ENCODE measurements at regions of chr9 and their contacts with region 1.

Region 1: DNA sequence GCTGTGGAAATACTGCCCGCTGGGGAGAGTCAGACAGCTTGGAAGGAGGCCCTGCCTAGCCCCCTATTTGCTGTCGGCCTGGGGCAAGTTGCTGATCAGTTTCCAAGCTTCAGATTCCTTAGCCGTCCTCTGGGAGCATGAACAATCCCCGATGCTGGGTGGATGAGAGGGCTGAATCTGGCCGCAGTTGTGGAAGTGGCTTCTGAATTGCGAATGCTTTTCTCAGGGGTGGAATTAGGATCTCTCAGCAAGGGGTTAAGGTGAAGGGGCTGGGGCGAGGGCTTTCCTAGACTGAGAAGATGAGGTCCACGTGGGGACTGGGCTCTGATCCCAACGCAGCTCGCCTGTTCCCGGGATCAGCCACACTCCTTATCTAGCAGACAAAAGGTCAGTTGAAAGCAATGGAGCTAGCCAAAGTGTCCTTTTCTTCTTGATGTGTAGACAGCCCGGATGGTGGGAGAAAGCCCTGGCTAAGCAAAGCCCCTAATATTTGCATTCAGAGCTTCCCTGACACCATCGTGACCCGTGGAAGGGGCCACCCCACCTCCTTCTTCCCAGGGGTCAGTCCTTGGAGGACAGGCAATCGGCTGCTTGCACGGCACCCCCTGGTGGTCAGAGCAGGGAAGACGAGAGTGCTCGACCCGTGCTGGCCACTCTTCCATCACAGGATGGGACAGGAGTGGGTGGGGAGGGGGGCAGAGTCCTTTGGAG is 54.9 kb downstream of the COL15A1 start:
- DNase-seq: peak; percentile 76
- ATAC-seq: peak; percentile 74
- H3K4me3 Mint-ChIP-seq: no peak overlapping the region
- H3K27ac Mint-ChIP-seq: no peak overlapping the region
- H3K4me1 Mint-ChIP-seq: peaks cover 16% of the 10 kb centered on the region
- H3K27me3 Mint-ChIP-seq: peaks cover 1% of the 10 kb centered on the region
- CTCF ChIP-seq: peak; percentile 94

Region 2: GRCh38 chr9:98807070-98807810 is 191.4 kb before region 1 on chr9 and contains the start of gene GALNT12:
- CTCF ChIA-PET with region 1: interaction called, 18 read pairs
- POLR2A ChIA-PET with region 1: no interaction called
- intact Hi-C with region 1: no loop called
- DNase-seq: peak; percentile 63
- ATAC-seq: peak; percentile 83
- H3K4me3 Mint-ChIP-seq: peak within 1 kb of the TSS; percentile 82
- H3K27ac Mint-ChIP-seq: peak within 1 kb of the TSS; percentile 50
- H3K4me1 Mint-ChIP-seq: peaks cover 25% of the 10 kb centered on the region
- H3K27me3 Mint-ChIP-seq: peaks cover 2% of the 10 kb centered on the region
- CTCF ChIP-seq: no peak
- total RNA-seq, gene GALNT12: 12.8 to 14.3 TPM

Region 3: GRCh38 chr9:98867429-98868168 is 131.0 kb before region 1 on chr9:
- CTCF ChIA-PET with region 1: no interaction called
- POLR2A ChIA-PET with region 1: no interaction called
- intact Hi-C with region 1: no loop called
- DNase-seq: peak; percentile 13
- ATAC-seq: no peak
- H3K4me3 Mint-ChIP-seq: no peak overlapping the region
- H3K27ac Mint-ChIP-seq: peak overlapping the region; percentile 28
- H3K4me1 Mint-ChIP-seq: no peaks in the 10 kb centered on the region
- H3K27me3 Mint-ChIP-seq: peaks cover 21% of the 10 kb centered on the region
- CTCF ChIP-seq: no peak

Region 4: DNA sequence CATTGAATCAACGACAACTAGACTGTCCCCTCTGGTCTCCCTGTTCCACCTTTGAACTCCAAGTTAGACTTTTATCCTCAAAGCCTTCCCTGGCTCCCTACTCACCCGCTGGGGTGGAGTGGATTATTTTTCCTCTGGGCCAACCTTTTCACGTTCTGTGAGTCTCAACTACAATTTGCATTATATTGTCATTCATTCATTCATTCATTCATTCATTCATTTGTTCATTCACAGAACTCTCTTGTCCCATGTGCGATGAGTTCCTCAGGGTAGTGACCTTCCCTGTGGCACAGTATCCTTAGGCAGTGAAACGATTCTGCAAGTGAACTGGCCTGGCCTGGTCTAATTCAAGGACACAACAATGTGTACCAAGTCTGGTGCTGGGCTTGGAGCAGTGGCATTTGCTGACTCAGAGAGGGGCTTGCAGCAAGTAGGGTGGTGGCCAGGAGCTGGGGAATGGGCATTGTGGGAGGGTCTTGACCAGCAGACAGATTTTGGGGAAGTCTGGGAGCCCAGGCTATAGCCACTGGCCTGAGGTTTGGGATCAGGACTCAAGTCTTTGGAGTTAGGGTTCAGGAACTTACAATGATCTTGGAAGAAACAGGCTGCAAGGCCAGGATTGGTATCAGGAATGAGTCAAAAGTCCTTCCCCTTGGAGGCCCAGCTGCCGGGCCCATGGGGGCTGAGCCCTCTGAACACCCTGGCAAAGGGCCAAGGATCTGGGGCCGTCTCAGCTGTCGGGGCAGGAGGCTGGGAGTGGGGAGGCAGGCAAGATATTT is 92.1 kb before region 1 on chr9:
- CTCF ChIA-PET with region 1: no interaction called
- POLR2A ChIA-PET with region 1: no interaction called
- intact Hi-C with region 1: no loop called
- DNase-seq: no peak
- ATAC-seq: no peak
- H3K4me3 Mint-ChIP-seq: no peak overlapping the region
- H3K27ac Mint-ChIP-seq: no peak overlapping the region
- H3K4me1 Mint-ChIP-seq: no peaks in the 10 kb centered on the region
- H3K27me3 Mint-ChIP-seq: peaks cover 4% of the 10 kb centered on the region
- CTCF ChIP-seq: no peak

Region 5: DNA sequence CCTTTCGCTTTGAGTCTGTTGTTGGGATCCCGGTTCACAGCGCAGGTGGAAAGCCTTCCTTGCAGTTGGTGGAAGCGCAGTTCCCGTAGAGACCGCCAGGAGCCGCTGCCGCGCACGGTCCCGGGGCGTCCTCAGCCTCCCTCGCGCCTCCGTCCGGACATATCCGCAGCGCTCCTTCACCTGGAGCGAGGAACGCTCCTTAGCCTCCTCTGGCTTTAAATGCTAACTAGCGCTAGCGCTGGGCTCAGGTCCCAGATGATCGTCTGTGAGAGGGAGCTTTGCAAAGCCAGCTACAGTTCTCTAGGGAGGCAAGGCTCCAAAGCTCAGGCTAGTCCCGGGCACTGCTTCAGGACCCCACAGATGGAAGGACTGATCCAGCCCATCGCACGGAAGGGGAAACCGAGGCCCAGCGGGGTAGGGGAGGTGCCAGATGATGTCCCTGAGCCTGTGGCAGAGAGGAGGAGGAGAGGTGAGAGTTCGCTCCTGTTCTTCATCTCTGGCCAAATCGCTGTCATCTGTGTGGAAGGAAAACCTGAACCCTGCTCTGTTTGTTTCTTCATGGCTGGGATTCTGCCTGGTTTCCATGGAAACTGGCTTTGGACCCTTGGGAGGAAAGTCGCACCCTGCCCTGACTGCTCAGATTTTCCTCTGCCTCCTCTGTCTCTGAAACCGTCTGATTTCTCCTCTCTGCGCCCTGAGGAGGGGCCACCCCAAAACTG is 23.4 kb before region 1 on chr9:
- CTCF ChIA-PET with region 1: interaction called, 39 read pairs
- POLR2A ChIA-PET with region 1: no interaction called
- intact Hi-C with region 1: no loop called
- DNase-seq: peak; percentile 86
- ATAC-seq: peak; percentile 99
- H3K4me3 Mint-ChIP-seq: no peak overlapping the region
- H3K27ac Mint-ChIP-seq: no peak overlapping the region
- H3K4me1 Mint-ChIP-seq: peaks cover 9% of the 10 kb centered on the region
- H3K27me3 Mint-ChIP-seq: no peaks in the 10 kb centered on the region
- CTCF ChIP-seq: peak; percentile 93

Region 6: GRCh38 chr9:99026338-99027298 is 28.0 kb after region 1 on chr9:
- CTCF ChIA-PET with region 1: interaction called, 10 read pairs
- POLR2A ChIA-PET with region 1: no interaction called
- intact Hi-C with region 1: no loop called
- DNase-seq: no peak
- ATAC-seq: peak; percentile 61
- H3K4me3 Mint-ChIP-seq: no peak overlapping the region
- H3K27ac Mint-ChIP-seq: no peak overlapping the region
- H3K4me1 Mint-ChIP-seq: peaks cover 20% of the 10 kb centered on the region
- H3K27me3 Mint-ChIP-seq: no peaks in the 10 kb centered on the region
- CTCF ChIP-seq: no peak

Region 7: DNA sequence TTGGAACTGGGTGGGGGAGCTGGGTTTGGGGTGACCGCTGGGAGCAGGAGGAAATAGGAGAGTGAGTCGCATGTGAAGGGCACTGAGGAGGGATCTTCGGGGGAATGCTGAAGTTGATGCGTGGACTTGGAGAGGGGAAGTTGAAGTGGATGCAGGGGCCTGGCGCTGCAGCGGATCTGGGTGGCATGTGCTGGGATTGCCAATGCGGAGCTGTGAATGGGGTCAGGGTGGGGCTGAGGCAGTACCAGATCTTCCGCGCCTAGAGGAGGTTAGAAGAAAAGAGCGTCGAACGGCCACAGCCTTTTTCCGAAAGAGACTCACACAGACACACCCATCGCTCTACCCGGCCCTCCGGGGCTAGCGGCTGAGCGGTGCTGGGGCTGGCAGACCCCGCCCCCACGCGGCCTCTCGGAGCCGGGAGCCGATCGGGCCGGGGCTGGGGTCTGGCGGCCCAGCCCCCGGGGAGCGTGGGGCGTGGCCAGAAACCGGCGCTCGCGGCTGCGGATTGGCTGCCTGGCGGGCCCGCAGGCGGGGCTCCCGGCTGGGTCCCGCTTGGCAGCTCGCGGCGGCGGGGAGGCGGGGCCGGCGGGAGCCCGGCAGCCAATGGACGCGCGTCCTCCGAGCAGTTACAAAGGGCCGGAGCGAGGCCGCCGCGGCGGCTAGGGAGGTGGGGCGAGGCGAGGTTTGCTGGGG is 106.0 kb after region 1 on chr9 and contains the start of gene TGFBR1:
- CTCF ChIA-PET with region 1: interaction called, 21 read pairs
- POLR2A ChIA-PET with region 1: interaction called, 3 read pairs
- intact Hi-C with region 1: no loop called
- DNase-seq: peak; percentile 92
- ATAC-seq: peak; percentile 87
- H3K4me3 Mint-ChIP-seq: peak within 1 kb of the TSS; percentile 78
- H3K27ac Mint-ChIP-seq: peak within 1 kb of the TSS; percentile 86
- H3K4me1 Mint-ChIP-seq: peaks cover 47% of the 10 kb centered on the region
- H3K27me3 Mint-ChIP-seq: no peaks in the 10 kb centered on the region
- CTCF ChIP-seq: no peak
- total RNA-seq, gene TGFBR1: 34.3 to 36.5 TPM

Region 8: DNA sequence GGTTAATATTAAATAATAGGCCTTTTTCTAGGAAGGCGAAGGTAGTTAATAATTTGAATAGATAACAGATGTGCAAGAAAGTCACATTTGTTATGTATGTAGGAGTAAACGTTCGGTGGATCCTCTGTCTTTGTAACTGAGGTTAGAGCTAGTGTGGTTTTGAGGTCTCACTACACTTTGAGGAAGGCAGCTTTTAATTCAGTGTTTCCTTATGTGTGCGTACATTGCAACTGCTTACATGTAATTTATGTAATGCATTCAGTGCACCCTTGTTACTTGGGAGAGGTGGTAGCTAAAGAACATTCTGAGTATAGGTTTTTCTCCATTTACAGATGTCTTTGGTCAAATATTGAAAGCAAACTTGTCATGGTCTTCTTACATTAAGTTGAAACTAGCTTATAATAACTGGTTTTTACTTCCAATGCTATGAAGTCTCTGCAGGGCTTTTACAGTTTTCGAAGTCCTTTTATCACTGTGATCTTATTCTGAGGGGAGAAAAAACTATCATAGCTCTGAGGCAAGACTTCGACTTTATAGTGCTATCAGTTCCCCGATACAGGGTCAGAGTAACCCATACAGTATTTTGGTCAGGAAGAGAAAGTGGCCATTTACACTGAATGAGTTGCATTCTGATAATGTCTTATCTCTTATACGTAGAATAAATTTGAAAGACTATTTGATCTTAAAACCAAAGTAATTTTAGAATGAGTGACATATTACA is 152.0 kb after region 1 on chr9:
- CTCF ChIA-PET with region 1: interaction called, 14 read pairs
- POLR2A ChIA-PET with region 1: interaction called, 3 read pairs
- intact Hi-C with region 1: no loop called
- DNase-seq: no peak
- ATAC-seq: peak; percentile 90
- H3K4me3 Mint-ChIP-seq: peak overlapping the region; percentile 32
- H3K27ac Mint-ChIP-seq: peak overlapping the region; percentile 55
- H3K4me1 Mint-ChIP-seq: peaks cover 42% of the 10 kb centered on the region
- H3K27me3 Mint-ChIP-seq: no peaks in the 10 kb centered on the region
- CTCF ChIP-seq: no peak

Measured in activated CD8-positive, alpha-beta T cell treated with anti-CD3 and anti-CD28 coated beads for 36 hours (primary cell).